CD4-positive, alpha-beta memory T cell (primary cell): ENCODE measurements at regions of chrX and their contacts with region 1.

Region 1: GRCh38 chrX:16528620-16529019 is 121.3 kb upstream of the S100G start:
- DNase-seq: peak; percentile 54 to 71 (median 61)
- H3K4me3 ChIP-seq: no peak overlapping the region
- H3K4me3 Mint-ChIP-seq: peak overlapping the region in 7 of 8 donors; percentile 17 to 68 (median 52)
- H3K27ac ChIP-seq: no peak overlapping the region
- H3K27ac Mint-ChIP-seq: peak overlapping the region; percentile 82 to 95 (median 88)
- H3K4me1 ChIP-seq: peaks cover 24% of the 10 kb centered on the region
- H3K4me1 Mint-ChIP-seq: peaks cover 19 to 51% (median 26%) of the 10 kb centered on the region in 4 donors
- H3K27me3 ChIP-seq: no peaks in the 10 kb centered on the region
- H3K27me3 Mint-ChIP-seq: no peaks in the 10 kb centered on the region

Region 2: DNA sequence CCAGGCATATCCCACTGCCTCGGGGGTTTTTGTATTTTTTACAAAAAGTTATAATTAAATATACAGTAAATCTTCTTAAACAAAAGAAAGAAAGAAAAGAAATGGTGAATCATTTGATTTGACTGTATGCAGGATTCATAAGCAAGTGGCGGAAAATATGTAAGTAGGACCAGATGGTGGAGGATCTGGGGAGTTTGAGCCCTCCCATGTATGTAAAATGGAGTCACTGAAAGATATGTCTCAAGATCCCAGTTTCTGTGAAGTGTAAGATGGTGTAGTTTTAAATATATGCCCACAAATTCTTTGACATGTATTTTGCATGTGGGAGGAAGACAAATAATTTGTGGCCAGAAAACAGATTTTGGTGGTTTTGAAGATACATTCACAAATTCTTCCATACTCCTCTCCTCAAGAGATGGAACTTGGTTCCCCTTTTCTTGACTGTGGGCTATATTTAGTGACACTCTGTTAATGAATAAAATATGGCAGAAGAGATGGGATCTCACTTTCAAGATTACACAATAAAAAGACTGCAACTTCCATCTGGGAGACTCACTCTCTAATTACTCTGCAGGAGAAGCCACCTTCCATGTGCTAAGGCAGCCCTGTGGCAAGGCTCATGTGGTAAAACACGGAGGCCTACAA is 12.3 kb before region 1 on chrX:
- CTCF ChIA-PET with region 1: no interaction called
- POLR2A ChIA-PET with region 1: no interaction called
- intact Hi-C with region 1: no loop called
- DNase-seq: no peak
- H3K4me3 ChIP-seq: no peak overlapping the region
- H3K4me3 Mint-ChIP-seq: no peak overlapping the region
- H3K27ac ChIP-seq: no peak overlapping the region
- H3K27ac Mint-ChIP-seq: no peak overlapping the region
- H3K4me1 ChIP-seq: no peaks in the 10 kb centered on the region
- H3K4me1 Mint-ChIP-seq: no peaks in the 10 kb centered on the region
- H3K27me3 ChIP-seq: no peaks in the 10 kb centered on the region
- H3K27me3 Mint-ChIP-seq: no peaks in the 10 kb centered on the region

Region 3: GRCh38 chrX:16603822-16604221 is 75.2 kb after region 1 on chrX:
- CTCF ChIA-PET with region 1: interaction called, 4 read pairs
- POLR2A ChIA-PET with region 1: no interaction called
- intact Hi-C with region 1: loop called (anchors 10 kb)
- DNase-seq: peak in 2 of 5 donors; percentile 8
- H3K4me3 ChIP-seq: no peak overlapping the region
- H3K4me3 Mint-ChIP-seq: peak overlapping the region; percentile 69 to 86 (median 76)
- H3K27ac ChIP-seq: peak overlapping the region; percentile 31
- H3K27ac Mint-ChIP-seq: peak overlapping the region; percentile 83 to 95 (median 94)
- H3K4me1 ChIP-seq: peaks cover 32% of the 10 kb centered on the region
- H3K4me1 Mint-ChIP-seq: peaks cover 9 to 35% (median 27%) of the 10 kb centered on the region in 4 donors
- H3K27me3 ChIP-seq: no peaks in the 10 kb centered on the region
- H3K27me3 Mint-ChIP-seq: no peaks in the 10 kb centered on the region